ENCODE measurements at regions of chr1 and their contacts with region 1.

Region 1: GRCh38 chr1:246139745-246140182 is 367.3 kb downstream of the SMYD3 start:
- DNase-seq: peak; percentile 15
- H3K4me3 Mint-ChIP-seq: no peak overlapping the region
- H3K27ac Mint-ChIP-seq: peak overlapping the region; percentile 90
- H3K4me1 Mint-ChIP-seq: peaks cover 47% of the 10 kb centered on the region
- H3K27me3 Mint-ChIP-seq: no peaks in the 10 kb centered on the region
- CTCF ChIP-seq: no peak

Region 2: GRCh38 chr1:245716561-245716960 is 423.2 kb before region 1 on chr1:
- CTCF ChIA-PET with region 1: no interaction called
- intact Hi-C with region 1: no loop called
- DNase-seq: no peak
- H3K4me3 Mint-ChIP-seq: no peak overlapping the region
- H3K27ac Mint-ChIP-seq: no peak overlapping the region
- H3K4me1 Mint-ChIP-seq: no peaks in the 10 kb centered on the region
- H3K27me3 Mint-ChIP-seq: no peaks in the 10 kb centered on the region
- CTCF ChIP-seq: no peak

Region 3: GRCh38 chr1:246155923-246156322 is 16.2 kb after region 1 on chr1:
- CTCF ChIA-PET with region 1: interaction called, 18 read pairs
- intact Hi-C with region 1: no loop called
- DNase-seq: no peak
- H3K4me3 Mint-ChIP-seq: no peak overlapping the region
- H3K27ac Mint-ChIP-seq: peak overlapping the region; percentile 77
- H3K4me1 Mint-ChIP-seq: peaks cover 50% of the 10 kb centered on the region
- H3K27me3 Mint-ChIP-seq: no peaks in the 10 kb centered on the region
- CTCF ChIP-seq: no peak